Upper lobe of right lung (tissue), 1 donor: ENCODE measurements at regions of chr7 and their contacts with region 1.

Region 1: DNA sequence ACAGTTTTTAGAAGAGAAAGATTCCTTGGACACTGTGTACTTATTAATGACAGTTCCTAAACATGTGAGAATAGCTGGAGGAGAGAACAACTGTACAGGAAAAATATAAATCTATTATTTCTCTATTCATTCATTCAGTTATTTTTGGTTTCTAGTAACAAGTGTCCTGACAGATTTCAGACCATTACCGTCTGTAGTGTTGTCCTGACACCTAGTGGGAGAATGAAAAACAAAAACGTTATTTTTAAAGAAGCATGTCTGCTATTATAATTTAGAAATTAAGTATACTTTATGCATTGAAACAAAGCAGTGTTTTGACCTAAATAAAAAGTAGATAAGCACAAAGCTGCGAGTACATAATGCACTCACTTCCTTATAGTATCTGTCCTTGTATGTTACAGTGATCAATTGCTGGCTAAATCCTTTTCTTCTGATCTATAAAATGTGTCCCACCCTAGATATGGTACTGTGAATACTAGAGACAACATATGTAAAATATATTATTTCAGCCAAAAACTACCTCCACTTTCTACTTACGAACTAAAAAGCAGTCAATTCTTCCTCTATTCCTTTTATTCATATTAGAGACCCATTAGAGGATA is 575.6 kb downstream of the ARL4A start:
- DNase-seq: no peak
- ATAC-seq: peak; percentile 55
- H3K4me3 ChIP-seq: no peak overlapping the region
- H3K27ac ChIP-seq: no peak overlapping the region
- H3K4me1 ChIP-seq: no peaks in the 10 kb centered on the region
- H3K27me3 ChIP-seq: no peaks in the 10 kb centered on the region
- CTCF ChIP-seq: peak; percentile 57

Region 2: DNA sequence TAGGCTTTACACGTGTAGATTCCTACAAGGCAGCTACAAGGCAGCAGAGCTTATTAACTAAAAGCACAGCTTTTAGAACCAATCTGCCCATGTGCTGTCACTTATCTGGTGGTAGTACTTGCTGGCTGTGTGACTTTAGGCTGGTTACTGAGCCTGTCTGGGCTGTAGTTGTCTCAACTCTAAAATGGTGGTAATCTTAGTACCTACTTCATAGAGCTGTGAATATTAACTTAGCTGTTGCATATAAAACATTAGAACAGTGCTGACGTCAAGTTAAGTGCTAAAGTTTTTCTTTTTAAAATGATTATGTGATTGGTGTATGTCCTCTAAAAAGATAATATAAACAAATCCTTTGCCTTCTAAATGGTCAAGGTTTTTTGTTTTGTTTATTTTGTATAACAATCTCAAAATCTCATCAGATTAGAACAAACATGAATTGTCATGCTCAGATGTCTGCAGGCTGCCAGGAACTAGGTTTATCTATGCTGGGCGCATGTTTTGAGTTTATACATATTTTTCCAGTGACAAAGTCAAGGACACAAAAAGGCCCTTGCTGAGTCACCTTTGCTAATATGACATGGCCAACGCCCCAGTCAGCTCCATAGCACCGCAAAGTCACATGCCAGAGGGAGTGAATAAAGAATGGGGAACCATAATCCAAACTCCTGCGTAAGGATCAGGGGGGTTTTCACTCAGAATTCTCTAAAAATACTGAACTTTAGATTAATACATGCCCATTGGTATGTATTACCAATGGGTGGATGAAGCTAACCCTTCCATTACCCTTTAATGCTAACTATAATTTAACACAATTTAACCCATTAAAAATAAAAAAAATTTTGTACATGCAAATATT is 615.4 kb before region 1 on chr7:
- intact Hi-C with region 1: loop called (anchors 10 kb)
- DNase-seq: no peak
- ATAC-seq: peak; percentile 27
- H3K4me3 ChIP-seq: no peak overlapping the region
- H3K27ac ChIP-seq: no peak overlapping the region
- H3K4me1 ChIP-seq: no peaks in the 10 kb centered on the region
- H3K27me3 ChIP-seq: no peaks in the 10 kb centered on the region
- CTCF ChIP-seq: no peak